Activated T-helper 2 cell treated with anti-CD3 and anti-CD28 coated beads, Interferon-gamma antibody, Interleukin-2, Interleukin-4, amounts not matched to agents 10 μg/mL and 5 μg/mL and 100 μg/mL, durations not matched to agents 14 hours and 24 hours and 36 hours (primary cell): ENCODE measurements at regions of chr20 and their contacts with region 1.

Region 1: GRCh38 chr20:41436679-41437078 is 70.1 kb upstream of the EMILIN3 start:
- DNase-seq: no peak
- H3K4me3 Mint-ChIP-seq: no peak overlapping the region
- H3K27ac Mint-ChIP-seq: peak overlapping the region; percentile 15
- H3K4me1 Mint-ChIP-seq: peaks cover 48% of the 10 kb centered on the region
- H3K27me3 Mint-ChIP-seq: no peaks in the 10 kb centered on the region

Region 2: GRCh38 chr20:41249406-41250281 is 187.0 kb before region 1 on chr20:
- intact Hi-C with region 1: no loop called
- DNase-seq: no peak
- H3K4me3 Mint-ChIP-seq: no peak overlapping the region
- H3K27ac Mint-ChIP-seq: no peak overlapping the region
- H3K4me1 Mint-ChIP-seq: peaks cover 15% of the 10 kb centered on the region
- H3K27me3 Mint-ChIP-seq: no peaks in the 10 kb centered on the region

Region 3: GRCh38 chr20:41462372-41463161 is 25.9 kb after region 1 on chr20:
- intact Hi-C with region 1: loop called (anchors 1 kb)
- DNase-seq: no peak
- H3K4me3 Mint-ChIP-seq: no peak overlapping the region
- H3K27ac Mint-ChIP-seq: peak overlapping the region; percentile 1
- H3K4me1 Mint-ChIP-seq: peaks cover 14% of the 10 kb centered on the region
- H3K27me3 Mint-ChIP-seq: no peaks in the 10 kb centered on the region

Region 4: GRCh38 chr20:41476013-41476752 is 39.5 kb after region 1 on chr20:
- intact Hi-C with region 1: loop called (anchors 5 kb)
- DNase-seq: no peak
- H3K4me3 Mint-ChIP-seq: no peak overlapping the region
- H3K27ac Mint-ChIP-seq: no peak overlapping the region
- H3K4me1 Mint-ChIP-seq: peaks cover 30% of the 10 kb centered on the region
- H3K27me3 Mint-ChIP-seq: no peaks in the 10 kb centered on the region

Region 5: GRCh38 chr20:41617931-41618806 is 181.5 kb after region 1 on chr20 and contains the start of gene CHD6:
- intact Hi-C with region 1: loop called (anchors 5 kb)
- DNase-seq: peak; percentile 99
- H3K4me3 Mint-ChIP-seq: peak within 1 kb of the TSS; percentile 89
- H3K27ac Mint-ChIP-seq: peak within 1 kb of the TSS; percentile 80
- H3K4me1 Mint-ChIP-seq: peaks cover 35% of the 10 kb centered on the region
- H3K27me3 Mint-ChIP-seq: peaks cover 15% of the 10 kb centered on the region
- total RNA-seq, gene CHD6: 32.5 and 32.7 TPM in 2 replicates